Activated T-helper 2 cell treated with anti-CD3 and anti-CD28 coated beads, Interferon-gamma antibody, Interleukin-2, Interleukin-4, amounts not matched to agents 10 μg/mL and 5 μg/mL and 100 μg/mL, durations not matched to agents 14 hours and 24 hours and 36 hours (primary cell): ENCODE measurements at regions of chr7 and their contacts with region 1.

Region 1: DNA sequence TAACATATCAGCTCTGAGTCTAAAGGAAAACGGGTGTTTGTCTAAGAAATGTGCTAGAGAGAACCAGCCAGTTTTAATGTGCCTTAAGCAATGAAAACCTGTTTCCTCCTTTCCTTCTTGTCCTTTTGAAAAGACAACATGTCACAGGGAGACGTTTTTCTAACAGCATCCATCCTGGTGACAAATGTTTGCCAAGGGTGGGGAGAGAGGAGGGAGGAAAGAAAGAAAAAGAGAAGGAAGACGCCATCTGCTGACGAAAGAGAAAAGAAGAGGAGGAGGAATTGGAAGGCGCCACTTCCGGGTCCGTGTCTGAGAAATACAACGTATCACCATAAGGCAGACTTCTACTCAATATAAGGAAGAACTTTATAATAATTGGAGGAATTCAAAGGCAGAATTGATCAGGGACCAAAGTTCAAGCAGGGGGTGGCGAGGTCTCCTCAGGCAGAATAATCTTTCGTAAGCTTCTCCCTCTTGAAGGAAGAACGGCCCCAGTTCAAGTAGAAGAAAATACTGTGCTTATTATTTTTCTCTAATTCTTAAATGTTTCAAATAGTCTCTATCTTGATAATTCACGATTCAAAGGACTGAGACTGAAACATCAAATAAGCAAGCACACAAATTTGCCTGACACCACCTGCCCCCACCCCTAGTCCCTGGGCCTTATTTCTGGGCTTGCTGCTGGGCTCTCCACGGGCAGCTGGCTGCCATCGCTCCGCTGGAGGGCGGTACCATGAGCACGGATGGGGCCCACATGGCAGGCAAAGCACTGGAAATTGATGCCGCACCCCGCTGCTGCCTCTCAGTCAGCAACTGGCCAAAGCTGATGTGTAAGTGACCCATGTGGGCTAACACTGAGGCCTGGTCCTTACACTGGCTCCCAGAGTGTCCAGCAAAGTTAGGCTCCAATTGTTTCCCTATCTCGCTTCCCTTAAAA is 273.7 kb upstream of the KLF14 start:
- DNase-seq: peak; percentile 57
- H3K4me3 Mint-ChIP-seq: peak overlapping the region; percentile 67
- H3K27ac Mint-ChIP-seq: peak overlapping the region; percentile 95
- H3K4me1 Mint-ChIP-seq: peaks cover 61% of the 10 kb centered on the region
- H3K27me3 Mint-ChIP-seq: no peaks in the 10 kb centered on the region

Region 2: GRCh38 chr7:130961128-130961601 is 46.5 kb before region 1 on chr7:
- intact Hi-C with region 1: loop called (anchors 1 kb)
- DNase-seq: peak; percentile 85
- H3K4me3 Mint-ChIP-seq: peak overlapping the region; percentile 95
- H3K27ac Mint-ChIP-seq: peak overlapping the region; percentile 98
- H3K4me1 Mint-ChIP-seq: peaks cover 34% of the 10 kb centered on the region
- H3K27me3 Mint-ChIP-seq: no peaks in the 10 kb centered on the region

Region 3: DNA sequence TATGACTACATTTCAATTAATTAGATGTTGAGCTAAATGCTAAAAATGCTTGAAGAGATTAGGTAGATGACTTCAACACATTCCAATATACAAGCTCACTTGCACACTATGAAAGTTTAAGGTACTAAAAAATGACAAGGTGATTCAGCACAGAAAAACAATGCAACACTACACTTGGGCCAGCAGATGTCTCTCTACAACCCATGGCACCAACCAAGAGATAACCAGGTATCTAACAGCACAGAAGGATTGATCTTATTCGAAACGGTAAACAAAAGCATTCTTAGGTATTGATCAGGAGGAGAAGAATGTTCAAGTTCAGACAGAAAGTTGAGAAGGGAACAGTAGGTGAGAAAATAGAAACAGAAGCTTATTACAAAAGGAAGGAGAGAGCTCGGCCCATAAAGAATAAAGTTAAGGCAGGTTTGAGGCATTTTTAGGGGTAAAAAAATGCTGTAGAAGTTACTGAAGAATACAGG is 25.5 kb before region 1 on chr7:
- intact Hi-C with region 1: loop called (anchors 1 kb)
- DNase-seq: no peak
- H3K4me3 Mint-ChIP-seq: no peak overlapping the region
- H3K27ac Mint-ChIP-seq: no peak overlapping the region
- H3K4me1 Mint-ChIP-seq: peaks cover 27% of the 10 kb centered on the region
- H3K27me3 Mint-ChIP-seq: no peaks in the 10 kb centered on the region

Region 4: DNA sequence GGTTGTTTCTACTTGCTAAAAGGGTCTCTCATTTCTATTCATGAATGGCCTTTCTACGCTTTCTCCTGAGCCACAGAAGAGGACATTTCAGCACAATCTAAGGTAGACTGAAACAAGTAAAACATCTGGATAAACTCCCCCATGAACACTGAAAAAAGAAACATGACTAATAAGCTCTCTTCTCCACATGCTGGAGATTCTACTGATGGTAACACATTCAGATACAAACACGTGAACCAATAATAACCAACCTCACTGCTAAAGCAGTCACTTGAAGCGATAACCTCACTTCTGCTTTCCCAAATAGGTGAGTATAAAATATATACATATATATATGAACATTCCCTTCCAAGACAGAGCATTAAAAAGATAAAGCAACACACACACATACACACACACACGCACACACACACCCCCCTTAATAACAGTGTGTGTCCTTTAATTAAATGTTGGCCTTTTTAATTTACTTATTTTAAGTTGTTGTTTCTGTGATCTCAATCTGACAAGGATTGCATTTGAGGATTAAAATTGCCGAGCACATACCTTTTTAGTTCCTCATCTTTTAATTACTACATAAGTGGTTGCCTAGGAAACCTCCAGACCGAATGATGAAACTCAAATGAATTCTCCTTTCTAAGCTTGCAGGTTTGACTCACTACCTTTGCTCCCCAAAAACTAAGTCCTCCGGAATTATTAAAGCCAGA is 18.8 kb after region 1 on chr7:
- intact Hi-C with region 1: loop called (anchors 1 kb)
- DNase-seq: no peak
- H3K4me3 Mint-ChIP-seq: no peak overlapping the region
- H3K27ac Mint-ChIP-seq: peak overlapping the region; percentile 84
- H3K4me1 Mint-ChIP-seq: peaks cover 64% of the 10 kb centered on the region
- H3K27me3 Mint-ChIP-seq: no peaks in the 10 kb centered on the region

Region 5: DNA sequence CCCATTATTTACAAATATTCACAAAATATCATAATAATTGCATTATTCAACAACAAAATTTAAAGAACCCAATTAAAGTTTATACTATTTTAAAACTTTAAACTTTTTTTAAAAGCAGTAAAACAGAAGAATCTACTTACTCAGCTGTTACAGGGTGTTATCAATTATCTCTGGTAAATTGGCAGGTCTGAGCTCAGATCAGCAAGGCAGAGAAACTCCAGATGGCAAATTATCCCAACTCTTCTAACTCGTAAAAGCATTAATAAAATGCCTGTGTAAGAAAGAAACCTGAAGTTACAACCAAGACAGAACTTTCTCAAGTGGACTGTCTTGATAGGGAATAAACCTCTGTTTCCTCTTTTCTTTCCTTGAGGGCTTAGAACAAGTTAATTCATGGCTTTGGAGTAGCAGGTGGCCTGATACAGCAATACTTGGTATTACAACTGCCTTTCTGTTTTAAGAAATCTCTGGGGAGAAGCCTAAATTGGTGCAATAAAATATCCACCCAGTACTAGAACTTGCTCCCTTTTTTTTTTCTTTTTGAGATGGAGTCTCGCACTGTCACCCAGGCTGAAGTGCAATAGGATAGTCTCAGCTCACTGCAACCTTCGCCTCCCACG is 44.7 kb after region 1 on chr7:
- intact Hi-C with region 1: no loop called
- DNase-seq: no peak
- H3K4me3 Mint-ChIP-seq: no peak overlapping the region
- H3K27ac Mint-ChIP-seq: no peak overlapping the region
- H3K4me1 Mint-ChIP-seq: peaks cover 49% of the 10 kb centered on the region
- H3K27me3 Mint-ChIP-seq: no peaks in the 10 kb centered on the region